Gastrocnemius medialis (tissue), 4 donors: ENCODE measurements at regions of chr19 and their contacts with region 1.

Region 1: DNA sequence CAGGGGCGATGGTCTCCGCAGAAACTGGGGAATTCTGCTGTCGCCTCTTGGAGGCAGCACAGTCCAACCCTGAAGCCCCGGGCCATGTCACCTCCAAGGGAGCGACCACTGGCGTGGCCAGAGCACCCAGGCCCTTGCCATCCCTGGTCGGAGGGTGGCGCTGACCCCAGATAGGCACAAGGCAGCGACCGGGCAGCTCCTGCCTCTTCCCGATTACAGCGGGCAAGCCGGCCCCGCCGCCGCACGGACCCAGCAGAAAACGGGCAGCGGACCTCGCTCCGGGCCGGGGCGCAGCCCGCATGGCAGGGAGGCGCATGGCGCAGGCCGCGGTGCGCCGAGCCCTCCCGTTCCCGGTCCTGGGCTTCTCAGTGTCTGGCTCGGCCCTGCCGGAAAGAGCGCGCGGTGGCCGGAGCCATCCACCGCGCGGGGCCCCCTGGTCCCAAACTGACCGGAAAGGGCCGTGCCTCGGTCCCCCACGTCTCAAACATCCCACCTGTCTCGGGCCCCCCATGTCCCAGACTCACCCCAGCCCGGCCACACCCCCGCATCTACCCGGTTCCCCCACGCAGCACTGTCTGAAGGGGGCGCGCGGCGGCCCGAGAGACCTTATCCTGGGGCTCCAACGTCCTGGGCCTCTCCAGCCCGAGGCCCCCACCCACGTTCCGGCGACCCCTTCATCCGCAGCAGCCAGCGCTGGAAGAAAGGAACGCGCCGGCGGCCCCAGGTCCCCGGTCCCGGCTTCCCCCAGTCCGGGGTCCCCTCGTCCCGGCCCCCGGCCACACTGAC is 727 bp downstream of the CERS1 start:
- DNase-seq: peak; percentile 33 to 68
- ATAC-seq: peak; percentile 72 to 73
- H3K4me3 ChIP-seq: peak overlapping the region; percentile 55 to 71 (median 58)
- H3K27ac ChIP-seq: peak overlapping the region; percentile 16 to 74 (median 46)
- H3K4me1 ChIP-seq: peaks cover 8 to 31% of the 10 kb centered on the region in 2 donors
- H3K27me3 ChIP-seq: no peaks in the 10 kb centered on the region
- CTCF ChIP-seq: peak in 4 of 5 experiments; percentile 41 to 57 (median 54)
- POLR2A ChIP-seq: peak in 1 of 2 donors; percentile 0

Region 2: GRCh38 chr19:18940769-18941407 is 45.7 kb after region 1 on chr19 and contains the start of gene HOMER3:
- in situ Hi-C with region 1: no loop called
- intact Hi-C with region 1: loop called (anchors 1 kb)
- DNase-seq: peak; percentile 57 to 74
- ATAC-seq: peak; percentile 67 to 78
- H3K4me3 ChIP-seq: peak within 1 kb of the TSS; percentile 67 to 93 (median 78)
- H3K27ac ChIP-seq: peak within 1 kb of the TSS; percentile 87 to 98 (median 94)
- H3K4me1 ChIP-seq: peaks cover 12 to 18% of the 10 kb centered on the region in 2 donors
- H3K27me3 ChIP-seq: no peaks in the 10 kb centered on the region
- CTCF ChIP-seq: peak in 2 of 5 experiments; percentile 42 to 65
- POLR2A ChIP-seq: peak; percentile 61 to 70
- total RNA-seq, gene HOMER3: 86.2 to 202 (median 113) TPM

Region 3: DNA sequence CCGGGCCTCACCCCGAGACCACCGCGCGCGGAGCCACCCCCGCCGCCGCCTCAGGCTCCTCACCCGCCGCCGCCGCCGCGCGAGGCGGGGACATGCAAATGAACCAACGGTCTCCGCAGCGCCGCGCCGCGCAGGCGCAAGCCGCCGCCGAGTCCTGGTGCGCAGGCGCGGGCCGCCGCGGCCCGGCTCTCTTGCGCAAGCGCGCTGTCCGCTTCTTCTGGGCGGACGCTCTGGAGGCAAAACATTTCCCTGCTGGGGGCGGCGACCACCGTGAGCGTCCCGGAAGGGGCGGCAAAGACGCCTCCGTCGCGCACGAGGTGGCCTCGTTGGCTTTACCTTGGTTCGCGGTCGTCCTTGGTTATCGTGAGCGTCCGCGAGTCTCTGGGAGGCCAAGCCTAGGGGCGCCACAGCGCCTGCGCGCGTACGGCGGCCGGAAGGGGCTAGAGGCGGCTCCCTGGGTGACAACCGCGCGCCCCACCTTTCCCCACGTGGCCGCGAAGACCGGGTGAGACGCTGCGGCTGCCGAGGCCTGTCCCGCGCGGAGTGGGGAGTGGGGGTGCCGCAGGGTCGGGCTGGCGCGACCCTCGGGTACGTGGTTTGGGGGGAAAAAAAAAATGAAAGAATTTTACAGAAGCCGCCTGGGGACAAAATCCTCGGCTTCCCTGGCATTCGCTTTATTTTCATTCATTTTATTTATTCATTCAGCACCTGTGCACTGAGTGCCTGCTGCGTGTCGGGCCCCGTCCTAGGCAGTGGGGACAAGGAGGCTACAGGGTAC is 138.4 kb after region 1 on chr19 and contains the starts of genes ARMC6 and SUGP2:
- in situ Hi-C with region 1: no loop called
- intact Hi-C with region 1: loop called (anchors 10 kb)
- DNase-seq: peak; percentile 62 to 80
- ATAC-seq: peak; percentile 88 to 91
- H3K4me3 ChIP-seq: peak within 1 kb of the TSS; percentile 69 to 96 (median 73)
- H3K27ac ChIP-seq: peak within 1 kb of the TSS; percentile 89 to 100 (median 94)
- H3K4me1 ChIP-seq: peaks cover 22 to 40% of the 10 kb centered on the region in 2 donors
- H3K27me3 ChIP-seq: no peaks in the 10 kb centered on the region
- CTCF ChIP-seq: peak in 3 of 5 experiments; percentile 19 to 46 (median 39)
- POLR2A ChIP-seq: peak; percentile 80 to 83
- total RNA-seq, gene ARMC6: 18.2 to 35.7 (median 25.2) TPM
- total RNA-seq, gene SUGP2: 24.6 to 38.2 (median 32.8) TPM